ENCODE measurements at regions of chr1 and their contacts with region 1.

Region 1: DNA sequence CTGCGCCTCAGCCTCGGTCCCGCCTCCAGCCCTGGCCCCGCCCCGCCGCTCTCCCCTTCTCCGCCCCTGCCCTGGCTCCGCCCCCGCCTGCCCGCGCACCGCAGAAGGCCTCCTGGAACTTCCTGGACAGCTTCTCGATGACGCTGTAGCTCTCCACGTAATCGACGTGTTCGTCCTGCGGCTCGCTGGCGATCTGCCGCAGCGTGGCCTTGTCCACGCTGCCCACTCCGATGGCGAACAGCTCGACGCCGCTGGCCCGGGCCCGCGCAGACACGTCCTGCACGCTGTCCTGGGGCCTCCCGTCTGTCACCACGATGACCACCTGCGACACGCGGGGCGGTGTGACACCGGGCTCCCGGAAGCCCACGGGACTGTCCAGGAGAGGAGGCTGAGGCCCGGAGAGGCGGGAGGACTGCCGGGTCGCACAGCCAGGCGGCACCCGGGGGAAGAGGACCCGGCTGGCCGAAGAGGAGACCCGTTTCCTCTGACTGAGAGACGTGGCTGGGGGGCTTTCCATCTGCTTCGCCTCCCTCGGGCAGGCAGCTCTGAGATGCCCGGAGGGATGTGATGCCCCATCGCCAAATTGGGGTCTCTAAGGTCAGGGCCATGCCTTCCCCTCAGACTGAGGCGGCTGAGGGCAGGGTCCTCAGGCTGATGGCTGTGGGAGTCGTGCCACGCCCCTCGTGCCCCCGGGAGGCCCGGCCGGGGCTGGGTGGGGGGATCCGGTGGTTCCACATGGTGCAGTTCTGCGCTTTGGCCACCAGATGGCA is 4.6 kb downstream of the MATN1 start:
- DNase-seq: peak; percentile 96
- H3K4me3 Mint-ChIP-seq: peak overlapping the region; percentile 89
- H3K27ac Mint-ChIP-seq: peak overlapping the region; percentile 91
- H3K4me1 Mint-ChIP-seq: peaks cover 5% of the 10 kb centered on the region
- H3K27me3 Mint-ChIP-seq: no peaks in the 10 kb centered on the region
- CTCF ChIP-seq: peak; percentile 96

Region 2: GRCh38 chr1:30388386-30388785 is 330.4 kb before region 1 on chr1:
- CTCF ChIA-PET with region 1: no interaction called
- POLR2A ChIA-PET with region 1: no interaction called
- intact Hi-C with region 1: no loop called
- DNase-seq: no peak
- H3K4me3 Mint-ChIP-seq: no peak overlapping the region
- H3K27ac Mint-ChIP-seq: no peak overlapping the region
- H3K4me1 Mint-ChIP-seq: no peaks in the 10 kb centered on the region
- H3K27me3 Mint-ChIP-seq: peaks cover 71% of the 10 kb centered on the region
- CTCF ChIP-seq: no peak

Region 3: GRCh38 chr1:30635391-30635975 is 83.3 kb before region 1 on chr1:
- CTCF ChIA-PET with region 1: no interaction called
- POLR2A ChIA-PET with region 1: no interaction called
- intact Hi-C with region 1: no loop called
- DNase-seq: no peak
- H3K4me3 Mint-ChIP-seq: no peak overlapping the region
- H3K27ac Mint-ChIP-seq: no peak overlapping the region
- H3K4me1 Mint-ChIP-seq: no peaks in the 10 kb centered on the region
- H3K27me3 Mint-ChIP-seq: no peaks in the 10 kb centered on the region
- CTCF ChIP-seq: no peak

Region 4: DNA sequence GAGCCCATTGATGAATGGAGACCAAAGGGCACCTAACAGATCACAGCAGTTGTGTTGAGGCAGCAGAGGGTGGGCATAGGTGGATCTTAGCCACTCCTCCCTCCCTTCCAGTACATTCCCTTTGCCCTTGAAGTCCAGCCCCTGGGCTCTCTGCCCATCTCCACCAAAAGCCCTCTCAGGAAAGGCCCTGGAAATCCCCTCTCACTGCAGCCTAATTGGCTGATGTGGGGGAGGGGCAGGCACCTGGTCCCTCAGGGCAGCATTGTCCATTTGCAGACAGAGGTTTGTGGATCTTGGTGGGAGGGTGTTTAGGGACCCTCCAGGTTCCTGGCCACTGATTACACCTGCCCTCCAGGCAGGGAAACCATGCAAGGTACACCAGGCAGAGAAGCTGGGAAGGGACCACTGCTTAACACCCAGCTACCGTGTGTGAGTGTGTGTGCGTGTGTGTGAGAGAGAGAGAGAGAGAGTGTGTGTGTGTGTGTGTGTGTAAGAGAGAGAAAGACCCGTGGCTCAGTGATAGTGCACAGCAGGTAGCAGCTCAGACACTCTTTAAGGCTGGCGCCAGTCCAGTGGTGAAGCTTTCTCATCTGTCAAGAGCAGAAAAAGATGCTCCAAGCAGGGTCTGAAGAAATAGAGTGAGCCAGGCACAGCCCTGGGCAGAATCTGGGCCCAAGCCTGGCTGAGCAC is 66.5 kb before region 1 on chr1:
- CTCF ChIA-PET with region 1: no interaction called
- POLR2A ChIA-PET with region 1: no interaction called
- intact Hi-C with region 1: no loop called
- DNase-seq: no peak
- H3K4me3 Mint-ChIP-seq: no peak overlapping the region
- H3K27ac Mint-ChIP-seq: peak overlapping the region; percentile 54
- H3K4me1 Mint-ChIP-seq: peaks cover 25% of the 10 kb centered on the region
- H3K27me3 Mint-ChIP-seq: no peaks in the 10 kb centered on the region
- CTCF ChIP-seq: no peak

Region 5: DNA sequence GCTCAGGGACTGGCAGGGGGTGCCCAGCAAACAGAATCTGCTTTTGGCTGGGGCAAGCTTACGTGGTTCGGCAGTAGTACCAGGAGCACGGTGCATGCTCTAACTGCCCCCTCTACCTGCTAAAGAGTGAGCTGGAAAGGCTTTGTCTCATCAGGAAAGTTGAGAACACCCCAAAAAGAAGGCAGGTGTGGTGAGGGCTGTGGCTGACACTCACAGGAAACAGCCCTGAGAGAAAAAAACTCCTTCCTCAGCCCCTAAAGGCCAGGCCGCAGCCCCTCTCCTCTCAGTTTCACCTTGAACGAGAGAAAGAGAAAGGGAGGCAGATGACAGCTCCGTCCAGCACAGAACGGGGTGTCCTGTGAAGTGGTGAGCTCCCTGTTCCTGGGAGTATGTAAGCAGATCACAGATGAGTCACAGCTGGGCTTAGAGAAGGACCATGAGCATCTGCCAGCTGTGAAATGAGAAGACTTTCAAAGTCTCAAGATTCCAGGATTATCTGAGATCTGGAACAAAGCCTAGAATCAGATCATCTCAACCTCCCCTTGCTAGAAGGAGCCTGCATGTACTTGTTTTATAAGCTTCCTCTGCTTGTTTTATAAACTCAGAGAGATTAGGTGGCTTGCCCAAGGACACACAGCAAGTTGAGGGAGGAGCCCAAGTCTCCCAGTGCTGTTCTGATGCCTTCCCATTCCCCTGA is 25.4 kb after region 1 on chr1:
- CTCF ChIA-PET with region 1: interaction called, 11 read pairs
- POLR2A ChIA-PET with region 1: interaction called, 3 read pairs
- intact Hi-C with region 1: no loop called
- DNase-seq: no peak
- H3K4me3 Mint-ChIP-seq: no peak overlapping the region
- H3K27ac Mint-ChIP-seq: no peak overlapping the region
- H3K4me1 Mint-ChIP-seq: peaks cover 45% of the 10 kb centered on the region
- H3K27me3 Mint-ChIP-seq: no peaks in the 10 kb centered on the region
- CTCF ChIP-seq: no peak

Region 6: DNA sequence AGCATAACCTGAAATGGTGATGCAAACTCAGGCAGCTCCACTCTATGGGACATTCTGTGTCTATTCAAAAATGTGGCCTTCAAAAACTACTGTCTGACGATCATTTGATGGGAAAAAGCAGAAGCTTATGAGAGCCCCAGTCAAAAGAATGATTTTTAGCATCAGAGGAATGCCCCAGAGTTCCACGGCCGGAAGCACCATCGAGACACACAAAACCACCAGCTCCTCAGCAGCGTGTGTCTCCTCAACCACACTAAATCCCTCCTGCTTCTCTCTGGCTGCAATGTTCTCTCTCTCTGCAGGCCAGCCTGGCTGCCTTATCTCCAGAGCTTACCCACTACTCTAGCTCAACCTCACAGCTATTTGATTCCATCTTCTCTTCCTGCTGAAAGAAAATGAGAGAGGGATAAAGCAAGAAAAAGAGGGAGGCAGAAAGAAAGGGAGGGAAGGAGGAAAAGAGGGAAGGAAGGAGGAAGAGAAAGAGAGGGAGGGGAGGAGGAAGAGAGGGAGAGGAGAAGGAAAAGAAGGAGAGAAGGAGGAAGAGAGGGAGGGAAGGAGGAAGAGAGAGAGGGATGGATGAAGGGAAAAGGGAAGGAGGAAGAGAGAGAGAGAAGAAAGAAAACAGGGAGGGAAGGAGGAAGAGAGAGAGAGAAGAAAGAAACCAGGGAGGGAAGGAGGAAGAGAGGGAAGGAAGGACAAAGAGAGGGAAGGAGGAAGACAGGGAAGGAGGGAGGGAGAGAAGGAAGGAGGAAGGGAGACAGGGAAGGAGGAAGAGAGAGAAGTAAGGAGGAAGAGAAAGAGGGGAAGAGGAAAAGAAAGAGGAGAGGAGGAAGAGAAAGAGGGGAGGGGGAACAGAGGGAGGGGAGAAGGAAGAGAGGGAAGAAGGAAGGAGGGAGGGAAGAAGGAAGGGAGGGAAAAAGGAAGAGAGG is 72.3 kb after region 1 on chr1:
- CTCF ChIA-PET with region 1: interaction called, 30 read pairs
- POLR2A ChIA-PET with region 1: interaction called, 29 read pairs
- intact Hi-C with region 1: no loop called
- DNase-seq: no peak
- H3K4me3 Mint-ChIP-seq: no peak overlapping the region
- H3K27ac Mint-ChIP-seq: peak overlapping the region; percentile 100
- H3K4me1 Mint-ChIP-seq: peaks cover 48% of the 10 kb centered on the region
- H3K27me3 Mint-ChIP-seq: no peaks in the 10 kb centered on the region
- CTCF ChIP-seq: no peak

Region 7: GRCh38 chr1:30911046-30911954 is 192.5 kb after region 1 on chr1:
- CTCF ChIA-PET with region 1: interaction called, 63 read pairs
- POLR2A ChIA-PET with region 1: interaction called, 41 read pairs
- intact Hi-C with region 1: loop called (anchors 1 kb)
- DNase-seq: peak; percentile 91
- H3K4me3 Mint-ChIP-seq: no peak overlapping the region
- H3K27ac Mint-ChIP-seq: no peak overlapping the region
- H3K4me1 Mint-ChIP-seq: peaks cover 15% of the 10 kb centered on the region
- H3K27me3 Mint-ChIP-seq: no peaks in the 10 kb centered on the region
- CTCF ChIP-seq: peak; percentile 85

Measured in MCF 10A (cell line).